AG04450 (cell line): ENCODE measurements at regions of chrX and their contacts with region 1.

Region 1: DNA sequence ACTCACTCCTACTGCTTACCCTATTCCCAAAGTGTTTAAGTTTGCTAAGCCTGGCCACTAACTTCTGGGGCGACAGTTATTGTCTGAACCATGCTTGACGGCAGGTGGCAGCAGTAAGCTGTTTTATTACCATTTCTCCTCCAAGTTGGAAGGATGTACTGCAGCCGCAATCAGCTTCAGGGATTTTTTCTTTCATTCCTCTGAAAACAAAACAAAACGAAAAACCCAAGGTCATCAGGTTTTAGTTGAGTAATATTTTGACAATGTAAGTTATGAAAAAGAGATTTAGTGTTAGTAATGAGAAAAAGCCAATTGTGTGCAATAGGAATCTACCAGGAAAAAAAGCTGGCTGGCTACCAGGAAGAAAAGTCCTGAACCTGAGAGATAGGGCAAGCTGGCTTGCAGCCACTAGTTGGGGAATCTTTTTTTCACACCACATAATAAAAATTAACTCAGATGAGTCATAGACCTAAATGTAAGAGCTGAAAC is 13.2 kb upstream of the RAB9B start:
- DNase-seq: peak; percentile 38
- H3K4me3 ChIP-seq: no peak overlapping the region
- H3K27ac ChIP-seq: no peak overlapping the region
- H3K27me3 ChIP-seq: no peaks in the 10 kb centered on the region
- CTCF ChIP-seq: peak; percentile 61

Region 2: GRCh38 chrX:103549916-103550315 is 295.3 kb before region 1 on chrX:
- CTCF ChIA-PET with region 1: no interaction called
- POLR2A ChIA-PET with region 1: no interaction called
- DNase-seq: no peak
- H3K4me3 ChIP-seq: no peak overlapping the region
- H3K27ac ChIP-seq: no peak overlapping the region
- H3K27me3 ChIP-seq: no peaks in the 10 kb centered on the region
- CTCF ChIP-seq: no peak

Region 3: DNA sequence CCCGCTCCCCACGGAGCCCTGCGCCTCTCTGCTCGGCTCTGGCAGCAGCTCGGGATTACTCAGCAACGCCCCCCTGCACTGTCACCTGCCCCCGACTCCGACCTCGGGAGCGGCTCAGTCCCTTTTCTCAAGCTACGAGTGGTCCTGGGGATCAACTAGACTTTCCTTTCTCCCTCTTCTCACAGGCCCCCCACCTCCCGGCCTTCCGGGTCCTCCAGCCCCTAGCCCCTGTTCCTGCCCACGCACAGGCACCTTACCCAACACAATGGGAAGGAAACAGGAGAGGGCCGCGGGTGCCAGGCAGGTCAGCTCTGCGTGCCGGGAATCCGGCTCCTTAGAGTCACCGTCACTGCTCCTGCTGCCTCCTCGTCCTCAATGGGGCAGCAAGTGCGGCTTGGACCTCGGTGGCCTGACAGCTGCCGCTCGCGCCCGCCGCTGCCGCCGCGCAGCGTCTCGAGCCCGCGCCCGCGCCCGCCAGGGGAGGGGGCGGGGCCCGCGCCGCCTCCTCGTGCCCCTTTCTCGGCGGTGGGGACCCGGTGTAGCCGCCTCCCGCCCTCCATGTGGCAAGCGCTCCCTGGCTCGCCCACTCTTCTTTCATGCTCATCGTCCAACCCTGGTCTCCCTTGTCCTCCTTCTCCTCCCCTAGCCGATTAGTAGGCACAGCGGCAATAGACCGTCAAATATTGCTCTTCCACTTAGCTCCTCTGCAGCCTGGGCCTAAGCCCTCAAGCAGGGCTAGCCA is 13.2 kb before region 1 on chrX and contains the start of gene RAB9B:
- CTCF ChIA-PET with region 1: interaction called, 20 read pairs
- POLR2A ChIA-PET with region 1: no interaction called
- DNase-seq: no peak
- H3K4me3 ChIP-seq: peak within 1 kb of the TSS; percentile 64
- H3K27ac ChIP-seq: no peak within 1 kb of the TSS
- H3K27me3 ChIP-seq: peaks cover 7% of the 10 kb centered on the region
- CTCF ChIP-seq: no peak
- polyA plus RNA-seq, gene RAB9B: 0.52 and 0.71 TPM in 2 replicates

Region 4: GRCh38 chrX:103941201-103941975 is 96.2 kb after region 1 on chrX:
- CTCF ChIA-PET with region 1: interaction called, 12 read pairs
- POLR2A ChIA-PET with region 1: no interaction called
- DNase-seq: no peak
- H3K4me3 ChIP-seq: no peak overlapping the region
- H3K27ac ChIP-seq: no peak overlapping the region
- H3K27me3 ChIP-seq: no peaks in the 10 kb centered on the region
- CTCF ChIP-seq: peak; percentile 43

Region 5: DNA sequence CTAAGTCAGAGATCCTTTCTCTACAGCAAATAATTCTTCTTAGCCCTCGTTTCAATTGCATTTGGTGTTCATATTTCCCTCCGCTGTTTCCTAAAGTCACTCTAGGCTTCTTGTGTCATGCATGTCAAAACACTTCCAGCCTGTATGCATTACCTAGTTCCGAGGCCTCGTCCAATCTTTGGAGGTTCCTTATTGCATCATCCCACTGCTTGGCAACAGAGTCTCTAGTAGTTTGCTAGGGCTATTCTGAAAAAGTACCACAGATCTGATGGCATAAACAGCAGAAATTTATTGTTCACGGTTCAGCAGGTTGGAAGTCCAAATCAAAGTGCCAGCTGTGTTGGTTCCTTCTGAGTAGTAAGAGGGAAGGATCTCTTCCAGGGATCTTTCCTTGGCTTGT is 200.4 kb after region 1 on chrX:
- CTCF ChIA-PET with region 1: no interaction called
- POLR2A ChIA-PET with region 1: no interaction called
- DNase-seq: no peak
- H3K4me3 ChIP-seq: no peak overlapping the region
- H3K27ac ChIP-seq: no peak overlapping the region
- H3K27me3 ChIP-seq: no peaks in the 10 kb centered on the region
- CTCF ChIP-seq: no peak

Region 6: DNA sequence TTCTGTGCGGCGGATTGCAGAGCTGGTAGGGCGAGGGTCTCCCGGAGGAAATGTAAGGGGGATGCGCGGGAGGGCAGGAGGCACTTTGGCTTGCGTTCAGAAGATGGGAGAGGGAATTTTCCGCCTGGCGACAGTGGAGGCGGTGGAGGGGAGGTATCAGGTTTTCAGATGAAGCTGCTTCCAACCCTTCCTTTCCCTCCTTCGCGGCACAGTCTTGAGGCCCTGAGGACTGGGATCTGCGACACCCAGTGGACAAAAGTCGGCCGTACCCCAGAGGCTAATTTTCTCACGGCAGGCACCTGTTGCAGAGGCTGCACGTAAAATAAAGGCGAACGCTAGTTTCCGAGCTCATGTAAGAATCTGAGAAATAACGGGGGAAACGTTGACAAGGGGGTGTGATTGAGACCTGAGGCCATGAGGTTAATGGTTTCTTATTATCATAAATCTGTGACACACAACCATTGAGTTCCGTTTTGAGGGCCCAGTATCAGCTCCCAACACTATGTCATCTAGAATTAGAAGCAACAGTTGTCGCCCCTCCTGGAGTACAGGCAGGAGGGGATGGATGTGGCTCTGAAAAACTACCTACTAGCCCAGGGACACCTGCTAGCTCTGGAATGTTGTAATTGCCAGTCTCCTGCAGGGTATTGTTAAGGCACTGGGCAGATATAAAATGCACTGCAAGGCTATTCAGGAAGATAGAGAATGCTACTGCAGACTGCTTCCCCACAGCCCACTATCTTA is 268.2 kb after region 1 on chrX:
- CTCF ChIA-PET with region 1: interaction called, 11 read pairs
- POLR2A ChIA-PET with region 1: no interaction called
- DNase-seq: no peak
- H3K4me3 ChIP-seq: peak overlapping the region; percentile 71
- H3K27ac ChIP-seq: peak overlapping the region; percentile 31
- H3K27me3 ChIP-seq: no peaks in the 10 kb centered on the region
- CTCF ChIP-seq: peak; percentile 47

Region 7: DNA sequence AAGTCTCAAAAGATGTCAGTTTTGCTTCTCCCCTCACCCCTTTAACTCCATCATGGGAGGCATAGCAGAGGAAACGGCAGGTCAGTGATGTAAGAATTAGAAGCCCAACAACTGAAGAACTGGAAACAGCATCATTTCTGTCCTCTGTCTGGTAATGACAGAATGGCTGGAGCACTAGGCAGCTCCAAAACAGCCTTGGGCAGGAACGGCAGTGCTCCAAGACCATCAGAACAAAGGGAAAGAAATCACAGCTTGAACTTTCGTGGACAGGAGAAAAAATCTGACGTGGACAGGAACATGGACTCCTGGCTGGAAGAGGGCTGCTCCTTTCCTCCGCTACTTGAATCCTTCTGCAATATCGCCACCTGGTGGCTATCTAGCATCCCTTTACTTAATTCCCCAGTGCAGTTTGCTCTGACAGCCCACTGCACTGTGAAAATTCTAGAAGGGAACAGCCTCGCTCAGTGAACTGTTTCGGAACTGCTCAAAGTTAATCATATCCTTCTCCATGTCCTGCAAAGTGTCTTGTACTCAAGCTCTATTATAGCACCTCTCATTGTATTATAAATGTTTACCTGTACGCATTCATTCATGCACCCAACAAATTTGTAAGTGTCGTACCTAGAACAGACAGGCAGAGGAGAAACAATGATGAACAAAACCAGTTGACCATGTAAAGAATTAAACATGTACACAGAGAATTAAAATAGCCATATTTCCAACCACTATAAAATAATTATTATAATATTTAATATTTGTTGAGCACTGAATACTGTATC is 291.2 kb after region 1 on chrX:
- CTCF ChIA-PET with region 1: interaction called, 35 read pairs
- POLR2A ChIA-PET with region 1: no interaction called
- DNase-seq: peak; percentile 79
- H3K4me3 ChIP-seq: peak overlapping the region; percentile 61
- H3K27ac ChIP-seq: peak overlapping the region; percentile 72
- H3K27me3 ChIP-seq: no peaks in the 10 kb centered on the region
- CTCF ChIP-seq: peak; percentile 69